PC-9 (cell line): ENCODE measurements at regions of chr3 and their contacts with region 1.

Region 1: GRCh38 chr3:12853191-12853741 is 11.9 kb upstream of the RPL32 start:
- DNase-seq: peak; percentile 55 to 88
- H3K4me3 ChIP-seq: no peak overlapping the region
- H3K27ac ChIP-seq: no peak overlapping the region
- H3K4me1 ChIP-seq: peaks cover 22% of the 10 kb centered on the region
- H3K27me3 ChIP-seq: no peaks in the 10 kb centered on the region; the same call in 1 of the 2 replicates
- CTCF ChIP-seq: no peak

Region 2: GRCh38 chr3:12501360-12502020 is 351.8 kb before region 1 on chr3:
- CTCF ChIA-PET with region 1: no interaction called
- POLR2A ChIA-PET with region 1: no interaction called
- intact Hi-C with region 1: no loop called
- DNase-seq: no peak
- H3K4me3 ChIP-seq: no peak overlapping the region
- H3K27ac ChIP-seq: no peak overlapping the region
- H3K4me1 ChIP-seq: no peaks in the 10 kb centered on the region
- H3K27me3 ChIP-seq: no peaks in the 10 kb centered on the region
- CTCF ChIP-seq: no peak

Region 3: DNA sequence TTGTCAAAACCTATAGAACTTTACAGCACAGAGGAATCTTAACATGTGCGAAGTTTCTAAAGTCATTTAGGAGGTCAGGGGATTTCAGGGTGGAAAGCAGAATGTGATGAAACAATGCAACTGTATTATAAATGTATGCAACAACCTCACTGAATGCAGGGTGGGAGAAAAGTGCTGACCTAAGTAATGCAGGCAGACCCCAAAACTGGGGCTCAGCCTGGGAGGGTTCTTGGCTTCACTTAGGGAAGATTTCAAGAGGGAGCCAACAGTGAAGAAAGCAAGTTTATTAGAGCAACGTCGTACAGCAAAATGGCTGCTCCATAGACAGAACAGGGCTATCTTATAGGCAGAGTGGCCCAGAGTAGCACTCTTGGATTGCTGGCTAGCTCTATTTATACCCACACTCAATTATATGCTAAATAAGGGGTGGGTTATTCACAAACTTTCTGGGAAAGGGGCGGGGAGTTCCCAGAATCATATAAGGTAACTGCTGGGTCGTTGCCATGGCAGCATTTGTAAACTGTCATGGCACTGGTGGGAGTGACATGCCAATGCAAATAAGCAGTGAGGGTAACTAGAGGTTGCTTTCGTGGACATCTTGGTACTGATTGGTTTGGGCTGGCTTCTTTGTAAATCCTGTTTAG is 71.0 kb before region 1 on chr3:
- CTCF ChIA-PET with region 1: no interaction called
- POLR2A ChIA-PET with region 1: no interaction called
- intact Hi-C with region 1: no loop called
- DNase-seq: peak in 1 of 2 experiments; percentile 46
- H3K4me3 ChIP-seq: no peak overlapping the region
- H3K27ac ChIP-seq: no peak overlapping the region
- H3K4me1 ChIP-seq: no peaks in the 10 kb centered on the region
- H3K27me3 ChIP-seq: no peaks in the 10 kb centered on the region
- CTCF ChIP-seq: no peak

Region 4: DNA sequence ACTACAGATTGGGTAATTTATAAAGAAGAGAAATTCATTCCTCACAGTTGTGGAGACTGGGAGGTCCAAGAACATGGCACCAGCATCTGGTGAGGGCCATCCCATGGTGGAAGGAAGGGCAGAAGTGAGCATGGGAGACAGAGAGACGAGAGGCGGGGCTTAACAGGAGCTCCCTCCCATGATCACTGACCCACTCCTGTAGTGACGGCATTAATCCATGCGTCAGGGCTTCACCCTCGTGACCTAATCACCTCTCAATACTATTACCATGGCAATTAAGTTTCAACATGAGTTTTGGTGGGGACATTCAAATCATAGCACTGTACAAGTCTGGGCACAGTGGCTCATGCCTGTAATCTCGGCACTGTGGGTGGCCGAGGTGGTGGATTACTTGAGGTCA is 29.0 kb before region 1 on chr3:
- CTCF ChIA-PET with region 1: no interaction called
- POLR2A ChIA-PET with region 1: no interaction called
- intact Hi-C with region 1: no loop called
- DNase-seq: no peak
- H3K4me3 ChIP-seq: no peak overlapping the region
- H3K27ac ChIP-seq: no peak overlapping the region
- H3K4me1 ChIP-seq: peaks cover 6% of the 10 kb centered on the region
- H3K27me3 ChIP-seq: no peaks in the 10 kb centered on the region
- CTCF ChIP-seq: no peak

Region 5: DNA sequence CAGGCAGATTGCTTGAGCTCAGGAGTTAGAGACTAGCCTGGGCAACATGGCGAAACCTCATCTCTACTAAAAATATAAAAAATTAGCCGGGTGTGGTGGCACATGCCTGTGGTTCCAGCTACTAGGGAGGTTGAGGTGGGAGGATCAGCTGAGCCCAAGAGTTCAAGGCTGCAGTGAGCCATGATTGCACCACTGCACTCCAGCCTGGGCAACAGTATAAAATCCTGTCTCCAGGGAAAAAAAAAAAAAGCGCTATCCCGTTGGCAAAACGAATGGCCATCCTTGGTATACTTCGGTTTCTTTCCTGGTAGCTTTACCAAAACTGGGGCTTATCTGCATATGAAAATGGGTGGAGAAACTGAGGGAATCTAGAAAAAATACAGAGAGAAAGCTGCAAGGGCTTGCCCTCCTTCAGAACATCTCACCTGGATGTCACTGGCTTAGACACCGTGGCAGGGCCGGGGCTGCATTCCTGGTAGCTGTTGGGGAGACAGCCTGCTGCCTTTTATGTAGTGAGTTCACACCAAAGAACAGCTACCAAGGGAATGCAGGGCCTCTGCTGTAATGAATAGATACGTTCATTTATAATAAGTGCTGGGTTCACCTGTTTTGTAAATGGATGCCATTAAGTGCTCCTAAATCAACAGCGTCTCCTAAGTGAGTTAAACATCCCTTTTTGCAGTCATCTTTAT is 124.0 kb after region 1 on chr3:
- CTCF ChIA-PET with region 1: interaction called, 21 read pairs
- POLR2A ChIA-PET with region 1: no interaction called
- intact Hi-C with region 1: no loop called
- DNase-seq: no peak
- H3K4me3 ChIP-seq: no peak overlapping the region
- H3K27ac ChIP-seq: no peak overlapping the region
- H3K4me1 ChIP-seq: no peaks in the 10 kb centered on the region
- H3K27me3 ChIP-seq: no peaks in the 10 kb centered on the region
- CTCF ChIP-seq: no peak